Dendritic cell treated with granulocyte-macrophage colony-stimulating factor and Interleukin-4, amounts not matched to agents 40 ng/mL and 50 ng/mL, for 4 days (primary cell): ENCODE measurements at regions of chr14 and their contacts with region 1.

Region 1: DNA sequence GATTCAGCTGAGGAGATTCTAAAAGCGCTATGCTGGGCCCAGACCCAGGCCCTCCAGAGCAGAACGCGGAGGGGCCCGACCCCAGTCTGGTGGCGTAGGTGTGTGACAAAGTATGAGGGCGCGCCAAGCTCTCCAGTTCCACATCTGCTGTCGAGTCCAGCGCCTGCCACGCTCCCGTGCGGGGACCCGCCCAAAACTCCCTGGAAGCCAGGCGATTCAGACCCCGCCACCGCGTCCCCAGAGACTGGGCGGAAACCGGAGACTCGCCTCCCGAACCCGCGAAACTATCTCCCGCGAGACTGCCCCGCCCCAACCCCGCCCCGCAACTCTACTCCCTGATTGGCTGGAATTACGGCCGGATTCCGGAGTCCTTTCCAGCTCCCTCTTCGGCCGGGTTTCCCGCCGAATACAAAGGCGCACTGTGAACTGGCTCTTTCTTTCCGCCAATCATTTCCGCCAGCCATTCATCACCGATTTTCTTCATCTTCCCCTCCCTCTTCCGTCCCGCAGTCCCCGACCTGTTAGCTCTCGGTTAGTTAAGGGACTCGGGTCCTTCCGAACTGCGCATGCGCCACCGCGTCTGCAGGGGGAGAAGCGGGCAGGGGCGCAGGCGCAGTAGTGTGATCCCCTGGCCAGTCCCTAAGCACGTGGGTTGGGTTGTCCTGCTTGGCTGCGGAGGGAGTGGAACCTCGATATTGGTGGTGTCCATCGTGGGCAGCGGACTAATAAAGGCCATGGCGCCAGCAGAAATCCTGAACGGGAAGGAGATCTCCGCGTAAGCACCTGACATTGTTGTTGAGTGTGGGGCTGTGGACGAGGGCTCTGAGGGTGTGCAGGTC is at the start of gene MTHFD1:
- H3K4me3 Mint-ChIP-seq: peak within 1 kb of the TSS; percentile 88
- H3K27ac Mint-ChIP-seq: peak within 1 kb of the TSS; percentile 89
- H3K4me1 Mint-ChIP-seq: peaks cover 35% of the 10 kb centered on the region
- H3K27me3 Mint-ChIP-seq: no peaks in the 10 kb centered on the region

Region 2: GRCh38 chr14:64338616-64339316 is 49.1 kb before region 1 on chr14:
- intact Hi-C with region 1: loop called (anchors 1 kb)
- H3K4me3 Mint-ChIP-seq: peak overlapping the region; percentile 92
- H3K27ac Mint-ChIP-seq: peak overlapping the region; percentile 91
- H3K4me1 Mint-ChIP-seq: peaks cover 25% of the 10 kb centered on the region
- H3K27me3 Mint-ChIP-seq: no peaks in the 10 kb centered on the region

Region 3: GRCh38 chr14:64465191-64465822 is 77.4 kb after region 1 on chr14 and contains the start of gene AKAP5:
- intact Hi-C with region 1: loop called (anchors 5 kb)
- H3K4me3 Mint-ChIP-seq: peak within 1 kb of the TSS; percentile 83
- H3K27ac Mint-ChIP-seq: peak within 1 kb of the TSS; percentile 48
- H3K4me1 Mint-ChIP-seq: peaks cover 26% of the 10 kb centered on the region
- H3K27me3 Mint-ChIP-seq: peaks cover 30% of the 10 kb centered on the region

Region 4: DNA sequence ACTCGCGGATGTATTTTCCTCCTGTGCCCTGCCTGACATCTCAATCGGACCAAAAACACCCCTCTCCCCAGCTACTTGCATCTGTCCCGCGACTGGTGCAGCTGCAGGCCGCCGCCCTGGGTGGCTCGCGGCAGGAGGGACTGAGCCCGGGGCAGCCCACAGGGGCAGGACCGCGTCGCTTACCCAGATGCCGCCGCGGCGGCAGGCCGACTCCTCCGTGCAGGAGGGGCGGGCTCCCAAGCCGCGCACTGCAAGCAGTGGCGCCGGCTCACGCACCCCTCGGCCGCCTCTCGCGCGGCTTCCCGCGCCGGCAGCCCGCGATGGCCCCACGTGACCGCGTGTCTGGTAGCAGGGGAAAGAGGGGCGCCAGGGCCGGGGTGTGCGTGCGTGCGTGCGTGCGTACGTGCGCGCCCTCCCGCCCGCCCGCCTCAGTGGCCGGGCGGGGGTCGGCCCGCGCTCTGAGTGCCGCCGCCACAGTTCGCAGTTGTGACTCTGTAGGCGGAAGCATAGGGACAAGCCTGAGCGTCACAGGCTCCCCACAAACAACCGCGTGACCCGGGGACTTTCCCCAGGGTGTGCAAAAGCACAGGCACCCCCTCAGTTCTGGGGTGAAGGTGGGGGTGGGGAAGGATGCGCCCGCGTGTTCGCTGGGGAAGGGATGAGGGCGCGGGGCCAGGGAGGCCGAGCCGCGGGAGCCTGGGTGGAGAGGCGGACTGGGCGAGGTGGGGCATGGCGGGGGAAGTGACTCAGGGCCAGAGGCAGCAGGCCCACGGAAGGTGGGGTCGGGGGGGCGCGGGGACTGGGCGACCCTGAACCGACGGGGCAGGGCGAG is 115.8 kb after region 1 on chr14 and contains the start of gene ZBTB25:
- intact Hi-C with region 1: loop called (anchors 2 kb)
- H3K4me3 Mint-ChIP-seq: peak within 1 kb of the TSS; percentile 86
- H3K27ac Mint-ChIP-seq: peak within 1 kb of the TSS; percentile 100
- H3K4me1 Mint-ChIP-seq: peaks cover 53% of the 10 kb centered on the region
- H3K27me3 Mint-ChIP-seq: no peaks in the 10 kb centered on the region

Region 5: DNA sequence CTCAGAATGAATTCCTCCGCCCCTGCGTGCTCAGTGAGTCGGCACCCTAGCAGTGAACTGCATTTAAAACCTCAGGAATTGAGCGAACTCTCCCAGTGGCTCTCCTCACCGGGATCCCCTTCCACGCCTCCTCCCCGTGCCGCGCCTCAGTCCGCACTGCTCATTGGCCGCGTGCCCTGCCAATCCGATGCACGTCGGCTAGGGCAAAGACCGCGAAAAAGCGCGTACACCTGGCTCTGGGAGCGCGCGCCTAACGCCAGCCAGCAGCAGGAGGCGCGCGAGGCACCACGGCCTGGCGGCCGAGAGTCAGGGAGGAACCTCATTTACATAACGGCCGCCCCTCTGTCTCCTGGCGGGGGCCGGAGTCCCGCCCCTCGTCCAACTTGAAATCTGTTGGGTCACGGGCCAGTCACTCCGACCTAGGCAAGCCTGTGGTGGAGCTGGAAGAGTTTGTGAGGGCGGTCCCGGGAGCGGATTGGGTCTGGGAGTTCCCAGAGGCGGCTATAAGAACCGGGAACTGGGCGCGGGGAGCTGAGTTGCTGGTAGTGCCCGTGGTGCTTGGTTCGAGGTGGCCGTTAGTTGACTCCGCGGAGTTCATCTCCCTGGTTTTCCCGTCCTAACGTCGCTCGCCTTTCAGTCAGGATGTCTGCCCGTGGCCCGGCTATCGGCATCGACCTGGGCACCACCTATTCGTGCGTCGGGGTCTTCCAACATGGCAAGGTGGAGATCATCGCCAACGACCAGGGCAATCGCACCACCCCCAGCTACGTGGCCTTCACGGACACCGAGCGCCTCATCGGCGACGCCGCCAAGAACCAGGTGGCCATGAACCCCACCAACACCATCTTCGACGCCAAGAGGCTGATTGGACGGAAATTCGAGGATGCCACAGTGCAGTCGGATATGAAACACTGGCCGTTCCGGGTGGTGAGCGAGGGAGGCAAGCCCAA is 152.6 kb after region 1 on chr14 and contains the start of gene HSPA2:
- intact Hi-C with region 1: loop called (anchors 1 kb)
- H3K4me3 Mint-ChIP-seq: peak within 1 kb of the TSS; percentile 91
- H3K27ac Mint-ChIP-seq: peak within 1 kb of the TSS; percentile 91
- H3K4me1 Mint-ChIP-seq: peaks cover 34% of the 10 kb centered on the region
- H3K27me3 Mint-ChIP-seq: peaks cover 50% of the 10 kb centered on the region